MCF 10A (cell line): ENCODE measurements at regions of chr1 and their contacts with region 1.

Region 1: DNA sequence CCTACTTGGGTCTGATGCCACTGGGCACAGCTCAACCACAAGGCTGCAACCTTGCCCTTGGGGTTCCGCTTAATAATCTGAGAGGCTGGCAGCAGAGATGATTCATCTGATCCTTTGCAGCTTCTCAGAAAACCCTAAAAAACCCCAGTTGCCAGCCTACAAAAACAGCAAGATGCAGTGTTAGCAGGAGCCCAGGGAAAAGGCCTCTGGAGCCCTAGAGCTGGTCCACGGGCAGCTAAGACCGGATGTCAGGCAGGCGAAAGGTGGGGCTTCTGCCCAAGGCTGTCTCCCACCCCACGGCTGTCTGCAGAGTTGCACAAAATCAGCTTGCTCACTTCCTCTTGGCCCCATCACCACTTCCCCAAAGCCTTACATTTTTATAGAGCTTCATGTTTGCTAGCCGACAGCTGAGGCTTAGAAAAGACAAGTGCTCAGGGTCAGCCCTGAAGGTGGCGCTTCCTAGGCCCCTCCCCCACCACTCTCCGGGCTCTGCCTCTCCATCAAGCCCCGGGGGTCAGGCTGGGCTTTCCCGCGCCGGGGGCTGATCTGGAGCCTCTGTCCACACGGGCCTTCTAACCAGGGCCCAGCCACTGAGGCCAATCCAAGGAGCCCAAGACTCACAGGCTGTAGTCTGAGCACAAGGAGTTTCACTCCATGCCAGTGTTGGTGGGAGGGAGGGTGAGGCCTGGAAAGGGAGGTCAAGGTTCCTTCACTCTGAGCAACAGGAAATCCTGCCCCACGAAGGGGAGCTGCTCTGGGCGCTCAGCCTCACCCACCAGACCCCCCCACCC is 4.2 kb upstream of the ADORA3 start:
- DNase-seq: peak; percentile 55
- H3K4me3 Mint-ChIP-seq: peak overlapping the region; percentile 56
- H3K27ac Mint-ChIP-seq: no peak overlapping the region
- H3K4me1 Mint-ChIP-seq: peaks cover 10% of the 10 kb centered on the region
- H3K27me3 Mint-ChIP-seq: no peaks in the 10 kb centered on the region
- CTCF ChIP-seq: no peak

Region 2: GRCh38 chr1:111392460-111392945 is 115.1 kb before region 1 on chr1:
- CTCF ChIA-PET with region 1: no interaction called
- POLR2A ChIA-PET with region 1: no interaction called
- intact Hi-C with region 1: no loop called
- DNase-seq: no peak
- H3K4me3 Mint-ChIP-seq: no peak overlapping the region
- H3K27ac Mint-ChIP-seq: no peak overlapping the region
- H3K4me1 Mint-ChIP-seq: no peaks in the 10 kb centered on the region
- H3K27me3 Mint-ChIP-seq: peaks cover 79% of the 10 kb centered on the region
- CTCF ChIP-seq: no peak

Region 3: DNA sequence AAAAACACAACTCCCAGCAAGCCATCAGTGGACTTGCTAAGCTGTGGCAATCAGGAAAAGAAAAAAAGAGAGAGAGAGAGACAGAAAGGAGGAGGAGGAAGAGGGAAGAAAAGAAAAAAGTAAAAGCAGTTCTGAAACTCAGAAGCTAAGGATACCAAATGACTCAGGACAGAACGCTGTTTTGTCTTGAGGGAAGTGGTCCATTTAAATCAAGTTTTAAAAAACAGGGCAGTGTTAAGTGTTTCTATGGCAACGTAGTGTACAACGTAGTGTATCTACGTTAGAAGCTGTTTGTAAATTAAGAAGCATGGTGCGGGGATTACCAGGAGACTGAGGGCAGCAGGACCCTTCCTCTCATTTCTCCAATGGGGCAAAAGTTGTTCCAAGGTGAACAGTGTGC is 10.0 kb before region 1 on chr1:
- CTCF ChIA-PET with region 1: interaction called, 22 read pairs
- POLR2A ChIA-PET with region 1: interaction called, 9 read pairs
- intact Hi-C with region 1: no loop called
- DNase-seq: no peak
- H3K4me3 Mint-ChIP-seq: no peak overlapping the region
- H3K27ac Mint-ChIP-seq: no peak overlapping the region
- H3K4me1 Mint-ChIP-seq: no peaks in the 10 kb centered on the region
- H3K27me3 Mint-ChIP-seq: peaks cover 50% of the 10 kb centered on the region
- CTCF ChIP-seq: no peak

Region 4: DNA sequence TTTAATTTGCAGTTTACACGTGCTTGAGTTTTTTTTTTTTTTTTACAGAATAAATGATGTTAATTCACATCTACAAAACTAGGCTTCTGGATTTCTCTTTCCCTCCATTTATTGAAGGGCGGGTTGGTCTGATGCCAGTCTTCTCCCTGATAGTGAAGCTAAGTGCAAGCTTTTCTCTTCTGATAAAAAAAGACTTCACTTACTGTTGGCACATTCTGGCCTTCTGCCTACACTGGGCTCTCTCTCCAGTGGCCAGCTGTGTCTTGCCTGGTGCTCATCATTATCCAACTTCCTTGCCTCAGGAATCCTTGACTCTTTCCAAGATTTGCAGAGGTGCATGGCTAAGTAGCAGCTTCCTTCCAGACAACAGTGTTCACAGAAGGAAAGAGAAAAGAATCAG is 104.4 kb after region 1 on chr1:
- CTCF ChIA-PET with region 1: interaction called, 11 read pairs
- POLR2A ChIA-PET with region 1: interaction called, 3 read pairs
- intact Hi-C with region 1: no loop called
- DNase-seq: no peak
- H3K4me3 Mint-ChIP-seq: no peak overlapping the region
- H3K27ac Mint-ChIP-seq: no peak overlapping the region
- H3K4me1 Mint-ChIP-seq: no peaks in the 10 kb centered on the region
- H3K27me3 Mint-ChIP-seq: peaks cover 17% of the 10 kb centered on the region
- CTCF ChIP-seq: no peak

Region 5: GRCh38 chr1:111672331-111672730 is 164.7 kb after region 1 on chr1:
- CTCF ChIA-PET with region 1: interaction called, 27 read pairs
- POLR2A ChIA-PET with region 1: no interaction called
- intact Hi-C with region 1: loop called (anchors 5 kb)
- DNase-seq: no peak
- H3K4me3 Mint-ChIP-seq: no peak overlapping the region
- H3K27ac Mint-ChIP-seq: no peak overlapping the region
- H3K4me1 Mint-ChIP-seq: no peaks in the 10 kb centered on the region
- H3K27me3 Mint-ChIP-seq: no peaks in the 10 kb centered on the region
- CTCF ChIP-seq: no peak

Region 6: DNA sequence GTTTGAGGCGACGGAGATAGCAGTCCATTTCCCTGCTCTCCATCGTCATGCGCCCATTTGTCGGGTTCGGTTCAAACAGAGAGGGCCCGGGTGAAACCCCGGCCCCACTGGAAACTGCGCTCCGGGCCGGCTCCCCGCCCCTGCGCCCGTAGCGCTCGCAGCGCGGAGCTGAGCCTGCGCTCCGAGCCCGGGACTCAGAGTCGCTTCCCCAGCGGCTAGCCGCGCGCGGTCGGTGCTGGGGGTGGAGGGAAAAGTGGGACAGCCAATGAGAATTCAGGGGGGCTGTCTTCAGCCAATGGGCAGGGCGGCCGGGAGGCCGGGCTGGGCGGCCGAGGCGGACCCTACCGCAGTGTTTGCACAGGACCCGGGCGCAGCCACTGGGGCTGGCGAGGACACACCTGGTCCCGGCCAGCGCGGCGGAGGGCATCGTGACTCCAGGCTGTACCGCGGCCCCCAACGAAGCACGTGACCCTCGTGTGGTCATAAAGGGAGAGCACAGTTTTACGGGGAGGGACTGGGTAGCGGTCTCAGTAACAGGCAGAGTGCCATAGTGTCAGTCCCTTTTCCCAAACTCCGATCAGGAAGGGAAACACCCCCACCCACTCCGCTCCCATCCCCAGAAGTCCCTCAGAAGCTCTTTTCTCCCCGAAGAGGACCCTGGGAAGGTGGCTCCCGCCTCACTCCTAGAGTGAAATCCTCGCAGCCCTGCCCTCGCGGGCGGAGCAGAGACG is 231.8 kb after region 1 on chr1 and contains the start of gene INKA2:
- CTCF ChIA-PET with region 1: interaction called, 25 read pairs
- POLR2A ChIA-PET with region 1: interaction called, 11 read pairs
- intact Hi-C with region 1: no loop called
- DNase-seq: peak; percentile 92
- H3K4me3 Mint-ChIP-seq: peak within 1 kb of the TSS; percentile 82
- H3K27ac Mint-ChIP-seq: peak within 1 kb of the TSS; percentile 94
- H3K4me1 Mint-ChIP-seq: peaks cover 17% of the 10 kb centered on the region
- H3K27me3 Mint-ChIP-seq: no peaks in the 10 kb centered on the region
- CTCF ChIP-seq: no peak
- total RNA-seq, gene INKA2: 3.5 and 6.6 TPM in 2 replicates